ENCODE measurements at regions of chr6 and their contacts with region 1.

Region 1: DNA sequence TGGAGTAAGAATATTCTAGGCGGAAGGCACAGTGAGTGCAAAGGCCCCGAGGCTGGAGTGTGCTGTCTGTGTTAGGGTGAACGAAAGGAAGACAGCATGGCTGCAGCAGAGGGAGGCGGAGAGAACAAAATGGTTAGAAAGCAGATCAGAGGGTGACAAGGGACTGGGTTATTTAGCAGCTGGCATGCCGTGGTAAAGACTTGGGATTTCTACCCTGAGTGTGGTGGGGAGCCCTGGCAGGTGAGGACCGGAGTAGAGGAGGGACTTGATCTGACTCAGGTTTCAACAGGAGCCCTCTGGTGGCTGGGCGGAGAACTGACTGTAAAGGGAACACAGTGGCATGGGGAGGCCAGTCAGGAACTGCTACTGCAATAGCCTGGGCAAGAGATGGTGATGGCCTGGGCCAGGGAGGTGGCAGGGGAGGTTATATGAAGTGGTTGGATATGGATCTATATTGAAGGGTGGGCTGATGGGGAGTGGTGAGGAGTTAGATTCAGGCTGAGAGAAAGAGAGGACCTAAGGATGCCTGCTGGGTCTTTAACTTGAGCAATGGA is 38.0 kb downstream of the PIM1 start:
- DNase-seq: peak; percentile 73 to 78
- ATAC-seq: peak in 7 of 8 donors; percentile 49 to 79 (median 62)
- H3K4me3 ChIP-seq: no peak overlapping the region
- H3K27ac ChIP-seq: peak overlapping the region in 1 of 10 donors; percentile 72
- H3K4me1 ChIP-seq: peaks cover 0 to 50% (median 0%) of the 10 kb centered on the region in 9 donors
- H3K27me3 ChIP-seq: peaks cover 0 to 3% (median 0%) of the 10 kb centered on the region in 7 donors
- CTCF ChIP-seq: peak in 8 of 9 donors; percentile 48 to 88 (median 65)

Region 2: DNA sequence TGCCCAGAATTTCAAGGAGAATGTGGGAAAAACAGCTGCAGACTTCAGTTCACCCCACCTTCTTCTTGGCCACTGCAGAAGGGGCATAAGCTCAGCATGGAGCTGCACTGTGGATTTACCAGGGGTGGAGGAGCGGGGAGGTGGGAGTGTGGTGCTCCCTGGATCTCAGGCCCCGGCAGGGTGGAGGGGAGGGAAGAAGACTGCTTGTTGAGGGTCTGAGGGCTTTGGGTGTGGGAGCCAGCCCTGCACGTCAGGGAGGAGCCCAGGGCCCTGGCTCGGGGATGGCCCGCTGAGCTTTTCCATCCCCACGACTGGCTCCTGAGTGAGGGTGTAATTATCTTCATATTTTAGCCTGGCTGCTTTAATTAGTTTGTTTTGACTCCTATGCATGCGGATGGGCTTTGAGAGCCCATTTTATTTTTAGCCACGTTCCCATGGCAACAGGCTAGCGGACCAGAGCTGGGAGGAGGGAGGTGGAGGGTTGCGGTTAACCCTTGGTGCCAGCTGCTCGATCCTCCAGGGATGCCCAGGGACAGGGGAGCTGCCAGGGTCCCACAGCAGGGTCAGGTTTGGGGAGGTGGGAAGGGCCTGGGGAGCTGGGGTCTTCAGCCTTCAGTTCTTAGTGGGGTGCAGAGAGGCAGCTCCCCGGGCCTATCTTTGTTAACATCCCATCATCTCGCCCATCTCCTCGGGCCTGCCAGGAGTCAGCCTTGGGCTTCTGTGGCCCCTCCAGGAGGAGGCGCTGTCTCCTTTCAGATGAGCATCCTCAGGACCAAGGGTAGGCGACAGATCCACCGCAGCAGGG is 442.2 kb before region 1 on chr6:
- intact Hi-C with region 1: loop called in 5 of 10 experiments (anchors 5 to 10 kb)
- DNase-seq: peak; percentile 80 to 83
- ATAC-seq: peak; percentile 53 to 86 (median 80)
- H3K4me3 ChIP-seq: no peak overlapping the region
- H3K27ac ChIP-seq: no peak overlapping the region
- H3K4me1 ChIP-seq: peaks cover 12 to 45% (median 39%) of the 10 kb centered on the region in 9 donors
- H3K27me3 ChIP-seq: no peaks in the 10 kb centered on the region
- CTCF ChIP-seq: peak; percentile 67 to 96 (median 92)

Region 3: DNA sequence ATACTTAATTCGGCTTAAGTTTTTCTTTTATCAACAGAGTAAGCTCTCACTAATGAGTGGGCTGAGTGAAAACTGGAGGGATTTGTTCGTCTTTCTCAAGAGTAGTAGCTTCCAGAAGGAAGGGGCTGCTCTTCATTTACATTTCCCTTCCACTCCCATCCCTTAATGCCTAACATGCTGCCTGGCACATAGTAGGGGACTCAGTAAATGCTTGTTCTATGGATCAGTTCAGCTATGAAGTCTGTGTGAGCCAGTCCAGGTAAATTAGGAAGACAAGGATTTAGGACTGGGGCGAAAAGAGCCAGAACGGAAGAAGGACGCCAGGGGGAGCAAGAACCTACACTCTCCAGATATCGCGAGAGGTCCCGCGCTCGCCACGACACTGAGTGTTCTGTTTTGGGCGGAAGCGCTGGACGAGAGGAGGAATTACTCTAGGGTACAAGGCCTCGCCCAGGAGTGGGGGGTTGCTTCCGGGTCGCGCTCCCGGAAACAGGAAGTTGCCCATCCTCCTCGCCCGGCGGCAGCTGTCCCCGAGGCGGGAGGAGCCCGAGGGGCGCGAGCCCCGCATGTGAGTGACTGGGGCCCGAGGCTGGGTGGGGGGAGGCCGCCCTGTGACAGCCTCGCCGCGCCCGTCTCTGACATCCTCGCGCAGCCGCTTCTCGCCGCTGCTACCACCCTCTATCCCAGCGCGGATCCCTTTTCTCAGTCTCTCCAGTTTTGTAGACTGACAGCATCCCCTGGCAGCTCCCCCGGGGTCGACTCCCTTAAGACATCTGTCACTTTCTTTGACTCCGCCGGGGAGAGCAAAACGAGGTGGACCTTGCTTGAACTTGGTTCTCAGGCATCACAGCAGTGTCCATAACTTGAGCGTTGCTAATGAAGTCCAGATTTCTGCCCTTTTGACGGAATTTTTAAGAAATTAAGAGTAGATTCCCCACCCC is 322.2 kb before region 1 on chr6 and contains the start of gene C6orf89:
- intact Hi-C with region 1: loop called in 6 of 10 experiments (anchors 5 to 10 kb)
- DNase-seq: peak; percentile 96 to 98
- ATAC-seq: peak; percentile 99 to 100 (median 100)
- H3K4me3 ChIP-seq: peak within 1 kb of the TSS; percentile 18 to 95 (median 74)
- H3K27ac ChIP-seq: peak within 1 kb of the TSS; percentile 76 to 95 (median 92)
- H3K4me1 ChIP-seq: peaks cover 8 to 46% (median 30%) of the 10 kb centered on the region in 9 donors
- H3K27me3 ChIP-seq: no peaks in the 10 kb centered on the region
- CTCF ChIP-seq: peak; percentile 78 to 96 (median 85)
- total RNA-seq, gene C6orf89: 64.6 to 104 (median 74.7) TPM

Region 4: DNA sequence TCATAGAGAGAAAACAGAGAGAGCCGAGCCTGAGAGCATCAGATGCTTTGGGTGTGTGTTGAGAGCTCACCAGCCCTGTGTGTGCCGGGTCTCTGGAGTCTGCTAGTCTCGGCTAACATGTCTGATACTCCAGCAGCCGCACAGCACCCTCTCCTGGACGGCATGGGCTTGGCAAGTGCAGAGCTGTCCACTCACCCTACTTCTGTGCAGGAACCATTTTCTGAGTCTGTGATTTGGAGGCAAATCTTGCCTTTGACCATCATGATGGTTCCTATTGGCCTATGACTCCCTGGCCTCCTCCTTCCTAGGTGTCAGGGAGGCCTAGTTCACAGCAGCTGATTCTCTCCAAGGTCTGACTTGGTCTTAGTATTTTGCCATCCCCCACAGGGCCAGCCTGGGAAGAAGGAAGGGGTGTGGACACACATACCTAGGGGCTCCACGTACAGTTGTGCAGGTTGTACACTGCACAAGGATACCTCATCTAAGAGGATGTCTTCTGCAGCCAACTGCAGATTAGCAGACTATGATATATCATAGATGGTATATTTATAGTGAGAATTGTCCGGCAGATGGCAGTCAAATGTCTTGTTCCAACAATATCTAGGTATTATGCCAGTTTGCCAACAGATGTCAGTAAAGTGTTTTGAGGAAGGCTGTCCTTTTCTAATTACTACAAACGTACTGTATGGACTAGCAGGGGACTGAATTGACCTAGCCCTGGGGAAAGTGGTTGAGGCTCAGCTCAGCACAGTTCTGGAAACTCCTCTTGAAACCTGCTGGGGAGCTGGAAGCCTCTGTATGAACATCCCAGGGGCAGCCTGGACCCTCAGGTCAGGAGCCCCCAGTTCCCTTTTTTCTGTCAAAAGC is 189.5 kb before region 1 on chr6:
- intact Hi-C with region 1: loop called in 7 of 10 experiments (anchors 1 to 10 kb)
- DNase-seq: peak; percentile 89 to 90
- ATAC-seq: peak; percentile 92 to 98 (median 96)
- H3K4me3 ChIP-seq: no peak overlapping the region
- H3K27ac ChIP-seq: peak overlapping the region in 7 of 10 donors; percentile 10 to 47 (median 38)
- H3K4me1 ChIP-seq: peaks cover 2 to 23% (median 8%) of the 10 kb centered on the region in 9 donors
- H3K27me3 ChIP-seq: no peaks in the 10 kb centered on the region
- CTCF ChIP-seq: peak; percentile 63 to 85 (median 83)

Region 5: DNA sequence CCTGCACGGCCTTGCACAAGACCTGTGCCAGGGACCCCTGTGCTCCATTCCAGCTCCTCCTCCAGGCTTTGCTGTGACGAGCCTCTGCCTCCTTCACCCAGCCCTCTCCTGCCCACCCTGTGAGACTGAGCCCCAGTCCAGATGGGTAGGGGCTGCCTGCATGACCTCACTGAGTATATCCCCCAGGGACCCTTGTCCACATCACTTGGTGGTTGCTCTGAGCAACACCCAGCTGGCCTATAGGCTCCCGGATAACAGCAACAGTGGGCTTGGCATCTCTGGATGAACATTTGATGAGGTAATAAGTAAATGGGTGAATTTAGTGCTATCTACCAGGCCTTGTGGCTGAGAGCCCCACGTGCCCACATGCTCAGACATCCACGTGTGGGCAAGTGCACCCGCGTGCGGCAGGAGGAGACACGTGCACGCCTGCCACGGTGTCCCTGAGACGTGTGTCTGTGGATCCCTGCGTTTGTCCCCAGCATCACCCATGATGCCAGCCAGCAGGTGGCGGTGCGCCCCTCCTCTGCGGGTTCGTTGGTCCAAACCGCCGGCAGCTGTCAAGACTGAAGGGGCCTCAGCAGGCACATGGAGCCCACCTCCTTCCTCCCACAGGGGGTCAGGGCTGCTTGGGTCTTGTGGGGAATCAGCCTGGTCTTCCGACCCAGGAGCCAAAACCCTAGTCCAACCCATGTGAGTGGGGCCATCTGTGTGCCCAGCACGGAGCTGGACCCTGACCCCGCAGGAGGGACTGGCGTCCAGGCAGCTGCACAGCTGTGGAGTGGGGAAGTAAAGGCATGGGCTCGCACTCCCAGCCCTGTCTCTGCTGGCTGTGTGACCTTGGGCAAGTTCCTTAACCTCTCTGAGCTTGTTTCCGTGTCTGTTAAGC is 156.6 kb before region 1 on chr6:
- intact Hi-C with region 1: loop called in 1 of 10 experiments (anchors 1 kb)
- DNase-seq: peak; percentile 88 to 93
- ATAC-seq: peak; percentile 77 to 90 (median 83)
- H3K4me3 ChIP-seq: peak overlapping the region in 1 of 10 donors; percentile 31
- H3K27ac ChIP-seq: peak overlapping the region in 5 of 10 donors; percentile 46 to 93 (median 73)
- H3K4me1 ChIP-seq: peaks cover 6 to 58% (median 19%) of the 10 kb centered on the region in 9 donors
- H3K27me3 ChIP-seq: no peaks in the 10 kb centered on the region
- CTCF ChIP-seq: peak; percentile 80 to 94 (median 91)

Region 6: DNA sequence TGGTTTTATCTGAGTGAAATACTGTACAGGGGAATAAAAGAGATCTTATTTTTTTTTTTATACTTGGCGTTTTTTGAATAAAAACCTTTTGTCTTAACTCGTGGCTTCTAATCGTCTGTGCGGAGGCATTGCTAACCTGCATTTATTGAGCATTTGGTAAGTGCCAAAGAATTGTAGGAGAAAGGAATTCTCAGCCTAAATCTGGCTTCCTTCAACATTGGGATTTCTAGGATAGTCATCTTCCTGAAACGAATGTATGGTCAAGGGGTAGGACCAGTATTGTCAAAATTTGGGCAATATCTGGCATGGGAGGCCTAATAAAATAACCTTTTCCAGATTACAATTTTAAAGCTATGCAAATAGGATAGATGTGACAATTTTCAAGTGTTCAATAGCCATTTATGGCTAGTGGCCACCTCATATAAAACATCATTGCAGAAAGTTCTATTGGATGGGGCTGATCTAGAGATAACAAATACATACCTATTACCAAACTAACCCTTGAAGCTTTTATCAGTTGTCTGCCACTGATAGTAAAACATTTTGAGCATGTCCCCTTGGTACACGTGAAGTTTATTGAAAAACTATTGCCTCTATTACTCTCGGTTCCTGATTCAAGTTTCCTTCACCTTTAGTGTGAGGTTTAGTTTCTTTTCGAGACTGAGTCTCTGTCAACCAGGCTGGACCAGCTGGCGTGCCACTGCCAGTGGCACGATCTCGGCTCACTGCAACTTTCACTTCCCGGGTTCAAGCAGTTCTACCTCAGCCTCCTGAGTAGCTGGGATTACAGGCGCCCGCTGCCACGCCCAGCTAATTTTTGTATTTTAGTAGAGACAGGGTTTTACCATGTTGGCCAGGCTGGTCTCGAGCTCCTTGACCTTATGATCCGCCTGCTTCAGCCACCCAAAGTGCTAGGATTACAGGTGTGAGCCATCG is 32.4 kb before region 1 on chr6:
- intact Hi-C with region 1: loop called in 3 of 10 experiments (anchors 2 to 5 kb)
- DNase-seq: no peak
- ATAC-seq: no peak
- H3K4me3 ChIP-seq: peak overlapping the region in 1 of 10 donors; percentile 96
- H3K27ac ChIP-seq: peak overlapping the region in 1 of 10 donors; percentile 94
- H3K4me1 ChIP-seq: peaks cover 0 to 68% (median 21%) of the 10 kb centered on the region in 9 donors
- H3K27me3 ChIP-seq: no peaks in the 10 kb centered on the region
- CTCF ChIP-seq: no peak

Measured in heart right ventricle (tissue), 16 donors.